ENCODE measurements at regions of chr17 and their contacts with region 1.

Region 1: GRCh38 chr17:8151123-8151640 is 1.0 kb downstream of the PER1 start:
- DNase-seq: peak; percentile 98
- H3K4me3 Mint-ChIP-seq: no peak overlapping the region
- H3K27ac Mint-ChIP-seq: no peak overlapping the region
- H3K4me1 Mint-ChIP-seq: peaks cover 42% of the 10 kb centered on the region
- H3K27me3 Mint-ChIP-seq: no peaks in the 10 kb centered on the region

Region 2: GRCh38 chr17:7844292-7845154 is 306.7 kb before region 1 on chr17:
- intact Hi-C with region 1: loop called (anchors 1 kb)
- DNase-seq: peak; percentile 96
- H3K4me3 Mint-ChIP-seq: peak overlapping the region; percentile 99
- H3K27ac Mint-ChIP-seq: peak overlapping the region; percentile 100
- H3K4me1 Mint-ChIP-seq: peaks cover 37% of the 10 kb centered on the region
- H3K27me3 Mint-ChIP-seq: peaks cover 2% of the 10 kb centered on the region

Region 3: DNA sequence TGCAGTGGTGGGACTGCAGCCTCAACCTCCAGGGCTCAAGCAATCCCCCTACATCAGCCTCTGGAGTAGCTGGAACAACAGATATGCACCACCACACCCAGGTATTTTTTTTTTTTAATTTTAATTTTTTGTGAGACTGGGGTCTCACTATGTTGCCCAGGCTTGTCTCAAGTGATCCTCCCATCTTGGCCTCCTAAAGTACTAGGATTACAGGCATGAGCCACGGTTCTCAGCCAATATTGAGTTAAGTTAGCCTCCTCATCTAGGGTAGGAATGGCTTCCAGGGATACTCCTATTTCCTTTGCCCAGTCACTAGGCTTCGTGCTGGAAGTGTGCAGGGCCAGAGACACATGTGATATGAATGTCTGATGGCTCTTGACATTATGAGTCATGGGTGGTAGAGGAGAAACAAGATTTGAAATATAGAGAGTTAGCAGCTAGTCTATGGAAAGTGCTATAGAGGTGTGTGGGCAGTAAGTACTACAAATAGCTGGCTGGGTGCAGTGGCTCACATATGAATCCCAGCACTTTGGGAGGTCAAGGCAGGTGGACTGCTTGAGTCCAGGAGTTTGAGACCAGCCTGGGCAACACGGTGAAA is 19.2 kb before region 1 on chr17:
- intact Hi-C with region 1: no loop called
- DNase-seq: no peak
- H3K4me3 Mint-ChIP-seq: no peak overlapping the region
- H3K27ac Mint-ChIP-seq: peak overlapping the region; percentile 31
- H3K4me1 Mint-ChIP-seq: peaks cover 9% of the 10 kb centered on the region
- H3K27me3 Mint-ChIP-seq: peaks cover 25% of the 10 kb centered on the region

Measured in activated CD4-positive, alpha-beta T cell treated with anti-CD3 and anti-CD28 coated beads, Interleukin-2, amount 10 ng/mL, durations not matched to agents 24 days and 14 days (primary cell).